B cell (primary cell): ENCODE measurements at regions of chr19 and their contacts with region 1.

Region 1: DNA sequence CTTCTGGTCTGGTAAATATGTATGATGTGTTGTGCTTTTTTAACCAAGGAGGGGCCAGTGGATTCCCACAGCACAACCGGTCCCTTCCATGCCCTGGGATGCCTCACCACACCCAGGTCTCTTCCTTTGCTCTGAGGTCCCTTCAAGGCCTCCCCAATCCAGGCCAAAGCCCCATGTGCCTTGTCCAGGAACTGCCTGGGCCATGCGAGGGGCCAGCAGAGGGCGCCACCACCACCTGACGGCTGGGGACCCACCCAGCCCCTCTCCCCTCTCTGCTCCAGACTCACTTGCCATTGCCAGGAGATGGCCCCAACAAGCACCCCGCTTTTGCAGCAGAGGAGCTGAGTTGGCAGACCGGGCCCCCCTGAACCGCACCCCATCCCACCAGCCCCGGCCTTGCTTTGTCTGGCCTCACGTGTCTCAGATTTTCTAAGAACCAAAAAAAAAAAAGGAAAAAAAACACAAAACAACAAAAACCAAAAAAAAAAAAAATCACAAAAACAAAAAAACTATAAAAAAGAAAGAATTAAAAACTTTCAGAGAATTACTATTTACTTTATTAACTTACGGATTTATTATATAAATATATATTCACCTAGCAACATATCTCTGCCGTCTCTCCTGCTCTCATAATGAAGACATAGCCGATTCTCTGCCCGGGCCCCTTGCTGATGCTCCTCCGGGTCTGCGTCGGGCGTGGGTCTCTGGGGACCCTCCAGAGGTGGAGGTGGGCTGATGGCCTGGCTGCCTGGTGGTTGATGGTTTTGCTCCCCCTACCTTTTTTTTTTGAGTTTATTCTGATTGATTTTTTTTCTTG is 14.4 kb downstream of the CAPN12 start:
- DNase-seq: peak; percentile 84
- ATAC-seq: peak; percentile 68
- H3K4me3 ChIP-seq: no peak overlapping the region
- H3K4me3 Mint-ChIP-seq: no peak overlapping the region
- H3K27ac ChIP-seq: no peak overlapping the region
- H3K27ac Mint-ChIP-seq: peak overlapping the region; percentile 39
- H3K4me1 ChIP-seq: peaks cover 16 to 23% of the 10 kb centered on the region in 2 donors
- H3K4me1 Mint-ChIP-seq: peaks cover 23% of the 10 kb centered on the region
- H3K27me3 ChIP-seq: no peaks in the 10 kb centered on the region
- H3K27me3 Mint-ChIP-seq: no peaks in the 10 kb centered on the region
- CTCF ChIP-seq: peak; percentile 85

Region 2: DNA sequence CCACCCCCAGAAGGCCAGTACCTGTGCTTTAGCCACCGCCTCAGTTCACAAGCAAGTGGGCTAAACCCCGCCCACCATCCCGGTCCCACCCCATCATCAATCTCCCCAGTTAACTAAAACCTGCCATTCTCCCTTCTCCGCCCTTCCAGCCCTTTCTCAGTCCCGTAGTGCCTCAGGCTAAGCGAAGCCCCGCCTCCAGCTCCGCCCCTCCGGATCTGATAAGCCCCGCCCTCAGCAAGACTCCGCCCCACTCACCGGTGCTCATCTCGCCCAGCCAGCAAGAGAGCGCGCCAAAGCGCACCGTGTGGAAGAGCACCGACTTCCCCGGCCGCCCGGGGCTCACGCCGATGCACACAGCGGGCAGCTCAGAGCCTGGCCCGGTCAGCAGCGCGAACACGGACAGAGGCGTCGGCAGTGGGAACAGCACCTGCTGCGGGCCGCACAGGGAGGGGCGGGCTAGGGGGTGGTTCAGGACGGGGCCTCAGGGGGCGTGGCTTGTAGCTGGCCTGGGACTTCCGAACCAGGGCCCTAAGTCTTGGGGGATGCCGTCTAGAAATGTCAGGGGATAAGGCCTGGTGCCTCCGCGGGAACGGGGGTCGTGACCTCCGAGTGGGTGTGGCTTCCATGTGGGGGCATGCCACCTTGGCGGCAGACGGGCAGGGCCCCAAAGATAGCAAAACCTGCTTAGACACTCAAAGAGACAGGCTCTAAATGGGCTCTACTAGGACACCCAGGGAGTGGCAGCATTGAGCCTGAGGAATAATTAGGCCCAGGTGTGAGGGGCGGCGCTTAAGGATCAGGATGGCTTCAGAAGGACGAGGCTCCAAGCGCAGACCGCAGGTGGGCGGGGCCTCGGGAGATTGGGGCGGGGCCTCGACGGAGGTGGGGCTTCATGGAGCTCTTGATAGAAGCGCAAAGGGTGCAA is 133.5 kb before region 1 on chr19:
- CTCF ChIA-PET with region 1: no interaction called
- POLR2A ChIA-PET with region 1: no interaction called
- intact Hi-C with region 1: no loop called
- DNase-seq: no peak
- ATAC-seq: peak; percentile 41
- H3K4me3 ChIP-seq: no peak overlapping the region
- H3K4me3 Mint-ChIP-seq: no peak overlapping the region
- H3K27ac ChIP-seq: no peak overlapping the region
- H3K27ac Mint-ChIP-seq: no peak overlapping the region
- H3K4me1 ChIP-seq: no peaks in the 10 kb centered on the region
- H3K4me1 Mint-ChIP-seq: no peaks in the 10 kb centered on the region
- H3K27me3 ChIP-seq: no peaks in the 10 kb centered on the region
- H3K27me3 Mint-ChIP-seq: no peaks in the 10 kb centered on the region
- CTCF ChIP-seq: no peak

Region 3: GRCh38 chr19:38647368-38647965 is 82.4 kb before region 1 on chr19 and contains the start of gene ACTN4:
- CTCF ChIA-PET with region 1: interaction called, 6 read pairs
- POLR2A ChIA-PET with region 1: no interaction called
- intact Hi-C with region 1: loop called (anchors 10 kb)
- DNase-seq: peak; percentile 100
- ATAC-seq: peak; percentile 94
- H3K4me3 ChIP-seq: peak within 1 kb of the TSS; percentile 82 to 96 (median 91)
- H3K4me3 Mint-ChIP-seq: peak within 1 kb of the TSS; percentile 90
- H3K27ac ChIP-seq: peak within 1 kb of the TSS; percentile 40 to 68
- H3K27ac Mint-ChIP-seq: peak within 1 kb of the TSS; percentile 93
- H3K4me1 ChIP-seq: peaks cover 21 to 31% of the 10 kb centered on the region in 2 donors
- H3K4me1 Mint-ChIP-seq: peaks cover 37% of the 10 kb centered on the region
- H3K27me3 ChIP-seq: no peaks in the 10 kb centered on the region
- H3K27me3 Mint-ChIP-seq: no peaks in the 10 kb centered on the region
- CTCF ChIP-seq: no peak
- total RNA-seq, gene ACTN4: 154 and 164 TPM in 2 replicates

Region 4: GRCh38 chr19:38769635-38770211 is 39.9 kb after region 1 on chr19:
- CTCF ChIA-PET with region 1: interaction called, 10 read pairs
- POLR2A ChIA-PET with region 1: interaction called, 10 read pairs
- intact Hi-C with region 1: loop called (anchors 5 kb)
- DNase-seq: peak; percentile 95
- ATAC-seq: peak; percentile 91
- H3K4me3 ChIP-seq: peak overlapping the region in 4 of 5 experiments; percentile 40 to 59 (median 47)
- H3K4me3 Mint-ChIP-seq: peak overlapping the region; percentile 81
- H3K27ac ChIP-seq: peak overlapping the region; percentile 75 to 77
- H3K27ac Mint-ChIP-seq: peak overlapping the region; percentile 89
- H3K4me1 ChIP-seq: peaks cover 6 to 12% of the 10 kb centered on the region in 2 donors
- H3K4me1 Mint-ChIP-seq: peaks cover 11% of the 10 kb centered on the region
- H3K27me3 ChIP-seq: no peaks in the 10 kb centered on the region
- H3K27me3 Mint-ChIP-seq: no peaks in the 10 kb centered on the region
- CTCF ChIP-seq: peak; percentile 86

Region 5: DNA sequence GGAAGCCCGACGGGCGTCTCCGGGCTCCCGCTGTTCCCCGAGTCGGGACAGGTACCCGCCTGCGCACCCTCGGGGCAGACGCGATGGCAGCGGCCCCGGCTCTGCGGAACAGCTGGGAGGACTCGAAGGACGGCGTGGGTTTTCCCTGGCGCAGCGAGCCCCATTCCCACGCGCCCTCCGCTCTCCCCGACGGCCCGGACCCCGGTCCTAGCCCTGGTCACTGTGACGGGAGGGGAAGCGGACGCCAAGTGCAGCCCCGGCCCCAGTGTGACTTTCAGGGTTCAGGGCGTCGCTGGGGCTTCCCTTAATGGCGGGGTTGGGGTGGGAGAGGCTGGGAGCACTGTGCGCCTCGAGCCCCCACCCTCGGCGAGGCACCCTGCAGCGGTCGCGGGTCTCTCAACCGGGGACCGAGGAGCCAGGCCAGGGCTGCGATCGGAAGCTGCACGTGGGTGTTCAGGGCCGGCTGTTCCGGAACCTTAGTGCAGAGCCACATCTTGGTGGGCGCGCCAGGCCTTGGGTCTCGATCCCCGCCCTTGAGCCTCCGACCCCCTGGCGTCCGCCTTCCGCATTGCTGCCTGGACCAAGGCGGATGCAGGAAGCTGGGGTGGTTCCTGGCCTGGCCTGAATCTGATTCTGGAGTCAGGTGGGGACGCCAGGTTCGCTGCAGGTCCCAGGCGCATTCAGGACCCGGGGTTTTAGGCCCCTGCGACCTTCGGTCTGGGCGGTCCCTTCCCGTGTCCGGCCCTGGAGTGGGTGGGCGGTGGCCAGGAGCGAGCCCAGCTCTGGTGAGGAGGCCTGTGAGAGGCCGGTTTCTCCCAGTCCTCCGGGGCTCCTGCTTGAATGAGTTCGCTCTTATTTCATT is 62.6 kb after region 1 on chr19:
- CTCF ChIA-PET with region 1: no interaction called
- POLR2A ChIA-PET with region 1: no interaction called
- intact Hi-C with region 1: loop called (anchors 10 kb)
- DNase-seq: peak; percentile 66
- ATAC-seq: peak; percentile 63
- H3K4me3 ChIP-seq: peak overlapping the region in 4 of 5 experiments; percentile 34 to 54 (median 48)
- H3K4me3 Mint-ChIP-seq: peak overlapping the region; percentile 81
- H3K27ac ChIP-seq: no peak overlapping the region
- H3K27ac Mint-ChIP-seq: peak overlapping the region; percentile 85
- H3K4me1 ChIP-seq: peaks cover 4 to 8% of the 10 kb centered on the region in 2 donors
- H3K4me1 Mint-ChIP-seq: peaks cover 4% of the 10 kb centered on the region
- H3K27me3 ChIP-seq: no peaks in the 10 kb centered on the region
- H3K27me3 Mint-ChIP-seq: no peaks in the 10 kb centered on the region
- CTCF ChIP-seq: peak; percentile 53